ENCODE measurements at regions of chr5 and their contacts with region 1.

Region 1: GRCh38 chr5:130954336-130954735 is 210.7 kb downstream of the HINT1 start:
- DNase-seq: no peak
- ATAC-seq: no peak
- H3K4me3 ChIP-seq: no peak overlapping the region
- H3K4me3 Mint-ChIP-seq: no peak overlapping the region
- H3K27ac ChIP-seq: no peak overlapping the region
- H3K27ac Mint-ChIP-seq: no peak overlapping the region
- H3K4me1 ChIP-seq: no peaks in the 10 kb centered on the region
- H3K4me1 Mint-ChIP-seq: no peaks in the 10 kb centered on the region
- H3K27me3 ChIP-seq: no peaks in the 10 kb centered on the region
- H3K27me3 Mint-ChIP-seq: no peaks in the 10 kb centered on the region
- CTCF ChIP-seq: no peak

Region 2: DNA sequence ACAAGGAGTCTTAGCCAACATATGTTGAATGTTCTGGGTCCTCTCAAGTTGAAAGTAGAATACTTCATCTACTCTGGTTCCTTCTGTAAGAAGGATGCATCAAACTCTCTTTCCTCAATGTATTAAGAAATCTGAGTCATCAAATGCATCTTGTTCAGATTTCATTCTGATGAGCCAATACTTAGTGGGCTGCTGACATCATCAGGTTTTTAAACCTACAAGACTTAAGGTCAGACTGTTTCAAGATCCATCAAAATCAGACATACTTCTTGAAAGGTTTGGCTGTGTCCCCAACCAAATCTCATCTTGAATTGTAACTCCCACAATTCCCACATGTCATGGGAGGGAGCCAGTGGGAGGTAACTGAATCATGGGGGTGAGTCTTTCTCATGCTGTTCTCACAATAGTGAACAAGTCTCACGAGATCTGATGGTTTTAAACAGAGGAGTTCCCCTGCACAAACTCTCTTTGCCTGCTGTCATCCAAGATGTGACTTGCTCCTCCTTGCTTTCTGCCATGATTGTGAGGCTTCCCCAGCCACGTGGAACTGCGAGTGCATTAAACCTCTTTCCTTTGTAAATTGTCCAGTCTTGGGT is 511.9 kb after region 1 on chr5:
- CTCF ChIA-PET with region 1: no interaction called
- POLR2A ChIA-PET with region 1: no interaction called
- intact Hi-C with region 1: loop called in 1 of 2 experiments (anchors 5 kb)
- DNase-seq: no peak
- ATAC-seq: peak; percentile 38
- H3K4me3 ChIP-seq: no peak overlapping the region
- H3K4me3 Mint-ChIP-seq: no peak overlapping the region
- H3K27ac ChIP-seq: no peak overlapping the region
- H3K27ac Mint-ChIP-seq: peak overlapping the region; percentile 2
- H3K4me1 ChIP-seq: peaks cover 15% of the 10 kb centered on the region
- H3K4me1 Mint-ChIP-seq: peaks cover 48% of the 10 kb centered on the region
- H3K27me3 ChIP-seq: no peaks in the 10 kb centered on the region
- H3K27me3 Mint-ChIP-seq: no peaks in the 10 kb centered on the region
- CTCF ChIP-seq: no peak